ENCODE measurements at regions of chr3 and their contacts with region 1.

Region 1: GRCh38 chr3:124761250-124761796 is 31.1 kb downstream of the UMPS start:
- DNase-seq: peak; percentile 91 to 96 (median 94)
- ATAC-seq: peak; percentile 91 to 93
- H3K4me3 ChIP-seq: no peak overlapping the region
- H3K27ac ChIP-seq: peak overlapping the region; percentile 40
- H3K4me1 ChIP-seq: peaks cover 2% of the 10 kb centered on the region
- H3K27me3 ChIP-seq: no peaks in the 10 kb centered on the region

Region 2: GRCh38 chr3:124905849-124906248 is 144.5 kb after region 1 on chr3:
- intact Hi-C with region 1: loop called (anchors 1 to 5 kb)
- DNase-seq: no peak
- ATAC-seq: no peak
- H3K4me3 ChIP-seq: no peak overlapping the region
- H3K27ac ChIP-seq: no peak overlapping the region
- H3K4me1 ChIP-seq: no peaks in the 10 kb centered on the region
- H3K27me3 ChIP-seq: no peaks in the 10 kb centered on the region

Measured in right cardiac atrium (tissue), 5 donors.